ENCODE measurements at regions of chr9 and their contacts with region 1.

Region 1: GRCh38 chr9:20640331-20641187 is 18.3 kb upstream of the MLLT3 start:
- DNase-seq: peak in 4 of 5 donors; percentile 37 to 91 (median 62)
- H3K4me3 ChIP-seq: no peak overlapping the region
- H3K27ac ChIP-seq: no peak overlapping the region
- H3K4me1 ChIP-seq: no peaks in the 10 kb centered on the region
- H3K27me3 ChIP-seq: no peaks in the 10 kb centered on the region
- CTCF ChIP-seq: no peak

Region 2: GRCh38 chr9:19939734-19940278 is 700.8 kb before region 1 on chr9:
- intact Hi-C with region 1: loop called (anchors 5 kb)
- DNase-seq: no peak
- H3K4me3 ChIP-seq: no peak overlapping the region
- H3K27ac ChIP-seq: no peak overlapping the region
- H3K4me1 ChIP-seq: no peaks in the 10 kb centered on the region
- H3K27me3 ChIP-seq: peaks cover 4% of the 10 kb centered on the region
- CTCF ChIP-seq: no peak

Region 3: GRCh38 chr9:20562051-20562450 is 78.5 kb before region 1 on chr9:
- intact Hi-C with region 1: no loop called
- DNase-seq: no peak
- H3K4me3 ChIP-seq: no peak overlapping the region
- H3K27ac ChIP-seq: no peak overlapping the region
- H3K4me1 ChIP-seq: peaks cover 0 to 7% (median 6%) of the 10 kb centered on the region in 3 donors
- H3K27me3 ChIP-seq: no peaks in the 10 kb centered on the region
- CTCF ChIP-seq: no peak

Region 4: DNA sequence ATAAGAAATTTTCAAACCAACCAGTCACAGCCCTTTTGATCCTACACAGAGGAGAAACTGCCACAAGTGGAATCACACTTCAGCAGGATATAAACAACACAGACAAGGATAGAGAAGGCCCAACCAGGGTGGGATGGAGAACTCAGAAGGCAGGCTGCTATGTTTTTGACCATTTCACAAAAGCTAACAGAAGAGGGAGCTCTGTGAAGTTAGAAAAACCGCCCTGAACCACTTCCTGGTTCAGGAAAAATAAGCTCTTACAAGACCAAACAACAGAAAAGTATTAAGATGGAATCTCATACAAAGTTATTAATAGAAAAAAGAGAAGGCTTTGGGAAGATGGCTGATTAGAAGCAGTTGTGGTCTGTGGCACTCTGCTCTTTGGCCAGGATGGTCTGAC is 438.2 kb after region 1 on chr9:
- intact Hi-C with region 1: no loop called
- DNase-seq: no peak
- H3K4me3 ChIP-seq: no peak overlapping the region
- H3K27ac ChIP-seq: no peak overlapping the region
- H3K4me1 ChIP-seq: no peaks in the 10 kb centered on the region
- H3K27me3 ChIP-seq: no peaks in the 10 kb centered on the region
- CTCF ChIP-seq: no peak